ENCODE measurements at regions of chr14 and their contacts with region 1.

Region 1: GRCh38 chr14:77301103-77301502 is 19.6 kb downstream of the POMT2 start:
- DNase-seq: peak; percentile 63
- H3K4me3 ChIP-seq: no peak overlapping the region
- H3K27ac ChIP-seq: no peak overlapping the region
- H3K27me3 ChIP-seq: no peaks in the 10 kb centered on the region
- CTCF ChIP-seq: peak; percentile 95

Region 2: GRCh38 chr14:77111043-77111442 is 190.1 kb before region 1 on chr14:
- CTCF ChIA-PET with region 1: no interaction called
- POLR2A ChIA-PET with region 1: no interaction called
- DNase-seq: no peak
- H3K4me3 ChIP-seq: no peak overlapping the region
- H3K27ac ChIP-seq: no peak overlapping the region
- H3K27me3 ChIP-seq: no peaks in the 10 kb centered on the region
- CTCF ChIP-seq: no peak

Region 3: DNA sequence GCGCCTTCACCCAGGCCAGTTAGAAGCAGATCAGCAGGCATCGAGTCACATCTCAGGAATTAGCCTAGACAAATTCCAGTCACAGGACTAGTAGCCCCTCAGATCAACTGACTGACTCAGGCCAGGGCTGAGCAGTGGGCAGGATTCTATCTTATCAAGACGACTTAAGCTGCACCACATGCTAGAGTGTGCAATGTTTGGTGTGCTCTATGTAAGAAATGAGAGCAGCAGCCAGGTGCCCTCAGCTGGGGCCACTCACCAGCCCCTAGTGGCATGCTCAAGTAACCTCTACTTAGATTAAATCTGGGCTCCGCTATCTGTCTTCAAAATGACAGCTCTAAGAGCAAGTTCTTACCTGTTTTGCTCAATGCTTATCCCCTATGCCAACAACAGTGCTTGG is 10.4 kb before region 1 on chr14:
- CTCF ChIA-PET with region 1: interaction called, 13 read pairs
- POLR2A ChIA-PET with region 1: no interaction called
- DNase-seq: peak; percentile 10
- H3K4me3 ChIP-seq: no peak overlapping the region
- H3K27ac ChIP-seq: no peak overlapping the region
- H3K27me3 ChIP-seq: no peaks in the 10 kb centered on the region
- CTCF ChIP-seq: no peak

Region 4: DNA sequence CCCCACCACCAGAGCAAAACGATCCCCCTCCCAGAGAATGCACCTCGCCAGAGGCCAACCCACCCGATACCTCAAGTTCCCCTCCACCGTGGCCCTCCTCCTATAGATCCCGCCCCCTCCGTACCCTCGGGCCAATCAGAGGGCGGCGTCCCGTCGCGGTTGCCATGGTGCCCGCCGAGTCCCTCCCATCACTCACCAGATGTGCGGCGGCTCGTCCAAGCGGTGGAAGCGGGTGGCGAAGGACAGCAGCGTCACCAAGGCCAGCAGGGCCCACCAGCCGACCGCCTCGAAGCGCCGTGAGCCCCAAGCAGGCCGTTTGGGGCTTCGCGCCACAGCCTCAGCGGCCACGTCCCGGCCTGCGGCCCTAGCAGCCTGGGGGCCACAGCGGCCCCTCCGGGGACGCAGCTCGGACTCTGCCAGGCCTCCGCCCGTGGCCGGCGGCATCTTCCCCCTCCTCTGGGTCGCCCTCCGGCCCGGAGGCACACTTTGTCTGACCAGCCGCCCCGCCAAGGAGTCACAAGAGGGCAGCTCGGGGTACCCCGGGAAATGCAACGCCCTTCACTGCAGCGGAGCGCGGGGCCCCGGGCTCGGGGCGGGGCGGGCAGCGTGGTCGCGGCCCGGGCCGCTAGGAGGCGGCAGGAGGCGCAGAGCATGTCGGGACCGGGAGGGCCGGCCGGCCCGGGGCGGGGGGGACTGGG is 19.3 kb after region 1 on chr14 and contains the start of gene POMT2:
- CTCF ChIA-PET with region 1: interaction called, 305 read pairs
- POLR2A ChIA-PET with region 1: interaction called, 12 read pairs
- DNase-seq: peak; percentile 63
- H3K4me3 ChIP-seq: peak within 1 kb of the TSS; percentile 91
- H3K27ac ChIP-seq: peak within 1 kb of the TSS; percentile 95
- H3K27me3 ChIP-seq: no peaks in the 10 kb centered on the region
- CTCF ChIP-seq: peak; percentile 34; the same call in 1 of the 2 replicates
- polyA plus RNA-seq, gene POMT2: 11.0 and 17.2 TPM in 2 replicates

Region 5: DNA sequence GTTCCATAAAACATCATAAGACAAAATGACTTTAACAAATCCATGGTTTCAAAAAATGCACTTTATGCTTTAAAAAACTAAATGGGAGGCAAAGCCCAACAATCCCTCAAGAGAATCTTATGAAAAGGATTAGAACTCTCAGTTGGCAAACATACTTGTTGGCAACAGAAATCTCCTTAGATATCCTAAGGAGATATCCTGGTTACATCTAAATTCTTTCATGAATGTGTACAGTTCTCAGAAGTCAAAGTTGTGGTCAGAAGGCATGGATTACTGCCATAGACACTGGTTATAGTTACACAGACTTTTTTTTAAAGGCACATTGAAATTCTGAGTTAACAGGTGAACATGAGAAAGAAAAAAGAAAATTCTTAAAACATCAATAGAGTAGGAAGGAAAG is 215.0 kb after region 1 on chr14:
- CTCF ChIA-PET with region 1: interaction called, 10 read pairs
- POLR2A ChIA-PET with region 1: no interaction called
- DNase-seq: no peak
- H3K4me3 ChIP-seq: no peak overlapping the region
- H3K27ac ChIP-seq: no peak overlapping the region
- H3K27me3 ChIP-seq: no peaks in the 10 kb centered on the region
- CTCF ChIP-seq: no peak

Region 6: DNA sequence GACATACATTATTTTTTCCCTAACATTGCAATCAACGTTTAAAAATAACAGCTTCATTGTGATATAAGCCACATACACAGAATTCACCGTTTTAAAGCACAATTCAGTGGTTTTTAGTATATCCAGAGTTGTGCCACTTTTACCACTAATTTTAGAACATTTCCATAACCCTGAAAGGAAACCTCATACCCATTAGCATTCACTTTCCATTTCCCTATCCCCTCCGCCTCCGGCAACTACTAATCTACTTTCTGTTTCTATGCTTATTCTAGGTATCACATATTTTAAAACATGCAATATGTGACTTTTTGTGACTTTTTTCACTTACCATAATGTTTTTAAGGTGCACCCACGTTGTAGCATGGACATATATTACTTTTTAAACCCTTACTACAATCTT is 253.1 kb after region 1 on chr14:
- CTCF ChIA-PET with region 1: interaction called, 15 read pairs
- POLR2A ChIA-PET with region 1: no interaction called
- DNase-seq: no peak
- H3K4me3 ChIP-seq: no peak overlapping the region
- H3K27ac ChIP-seq: no peak overlapping the region
- H3K27me3 ChIP-seq: no peaks in the 10 kb centered on the region
- CTCF ChIP-seq: no peak